CD4-positive, alpha-beta T cell (primary cell): ENCODE measurements at regions of chr17 and their contacts with region 1.

Region 1: DNA sequence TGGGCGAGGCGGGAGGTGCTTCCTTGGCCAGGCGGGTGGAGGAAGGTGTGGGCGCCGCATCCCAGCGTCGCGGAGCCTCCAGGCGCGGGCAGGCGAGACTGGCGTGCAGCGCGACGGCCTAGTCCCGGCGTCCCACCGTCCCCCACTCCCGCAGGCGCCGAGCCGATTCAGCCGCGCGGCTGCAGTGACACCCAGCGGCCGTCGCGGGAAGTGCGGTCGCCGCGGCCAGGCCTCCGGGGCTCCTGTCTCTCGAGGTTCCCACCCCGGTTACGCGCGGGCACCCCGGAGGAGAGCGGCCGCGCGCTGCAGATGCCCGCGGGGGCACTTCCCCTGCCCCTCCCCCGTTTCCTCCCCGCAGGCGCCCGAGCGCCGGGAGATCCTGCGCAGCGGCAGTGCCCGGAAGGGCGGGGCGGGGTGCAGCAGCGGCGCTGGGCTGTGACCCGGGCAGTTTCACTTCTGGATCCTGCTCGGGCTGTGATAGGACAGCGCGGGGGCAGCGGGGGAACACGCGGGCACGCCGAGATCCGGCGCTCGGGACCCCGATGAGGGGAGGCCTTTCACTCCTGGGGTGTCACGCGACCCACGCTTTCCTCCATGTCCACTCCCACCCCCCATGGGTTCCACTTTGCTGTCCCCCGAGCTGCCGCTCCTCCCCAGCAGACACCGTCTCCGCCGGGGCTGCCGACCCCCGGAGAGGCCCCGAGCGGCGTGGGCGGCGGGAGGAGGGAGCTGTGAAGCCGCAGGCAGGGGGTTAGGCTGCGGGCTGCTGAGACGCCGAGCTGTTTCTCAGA is 16.6 kb downstream of the GRB7 start:
- DNase-seq: peak; percentile 92 to 99 (median 97)
- ATAC-seq: peak; percentile 72
- H3K4me3 ChIP-seq: peak overlapping the region; percentile 71
- H3K4me3 Mint-ChIP-seq: peak overlapping the region; percentile 87
- H3K27ac ChIP-seq: peak overlapping the region; percentile 95 to 97
- H3K27ac Mint-ChIP-seq: peak overlapping the region; percentile 92
- H3K4me1 ChIP-seq: peaks cover 59% of the 10 kb centered on the region
- H3K4me1 Mint-ChIP-seq: peaks cover 56% of the 10 kb centered on the region
- H3K27me3 ChIP-seq: no peaks in the 10 kb centered on the region
- H3K27me3 Mint-ChIP-seq: no peaks in the 10 kb centered on the region
- CTCF ChIP-seq: peak; percentile 89

Region 2: DNA sequence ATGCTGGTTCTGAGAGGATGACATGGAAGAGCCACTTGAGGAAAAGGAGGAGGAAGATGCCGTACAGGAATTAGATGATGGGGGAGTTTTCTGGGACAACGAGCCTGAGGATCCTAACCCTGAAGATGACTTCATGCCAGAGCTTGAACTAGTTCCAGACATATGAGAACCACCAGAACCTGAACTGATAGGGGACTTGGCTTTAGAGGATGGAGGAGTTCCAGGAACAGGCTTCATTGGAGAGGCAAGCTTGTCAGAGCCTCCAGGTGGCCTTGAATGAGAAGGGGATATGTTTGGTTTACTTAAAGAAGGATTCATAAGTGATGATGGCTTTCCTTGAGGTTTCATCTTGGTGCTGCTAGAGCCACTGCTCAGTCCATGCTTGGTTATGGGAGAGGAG is 346.0 kb before region 1 on chr17:
- CTCF ChIA-PET with region 1: no interaction called
- POLR2A ChIA-PET with region 1: no interaction called
- intact Hi-C with region 1: no loop called
- DNase-seq: no peak
- ATAC-seq: no peak
- H3K4me3 ChIP-seq: no peak overlapping the region
- H3K4me3 Mint-ChIP-seq: no peak overlapping the region
- H3K27ac ChIP-seq: no peak overlapping the region
- H3K27ac Mint-ChIP-seq: no peak overlapping the region
- H3K4me1 ChIP-seq: no peaks in the 10 kb centered on the region
- H3K4me1 Mint-ChIP-seq: peaks cover 5% of the 10 kb centered on the region
- H3K27me3 ChIP-seq: no peaks in the 10 kb centered on the region
- H3K27me3 Mint-ChIP-seq: no peaks in the 10 kb centered on the region
- CTCF ChIP-seq: no peak

Region 3: GRCh38 chr17:39527220-39527813 is 227.0 kb before region 1 on chr17:
- CTCF ChIA-PET with region 1: no interaction called
- POLR2A ChIA-PET with region 1: no interaction called
- intact Hi-C with region 1: loop called in 1 of 2 experiments (anchors 1 kb)
- DNase-seq: peak in 3 of 14 experiments; percentile 27 to 30 (median 27)
- ATAC-seq: no peak
- H3K4me3 ChIP-seq: no peak overlapping the region
- H3K4me3 Mint-ChIP-seq: no peak overlapping the region
- H3K27ac ChIP-seq: no peak overlapping the region
- H3K27ac Mint-ChIP-seq: no peak overlapping the region
- H3K4me1 ChIP-seq: no peaks in the 10 kb centered on the region
- H3K4me1 Mint-ChIP-seq: no peaks in the 10 kb centered on the region
- H3K27me3 ChIP-seq: no peaks in the 10 kb centered on the region
- H3K27me3 Mint-ChIP-seq: no peaks in the 10 kb centered on the region
- CTCF ChIP-seq: peak; percentile 46

Region 4: GRCh38 chr17:39668199-39668966 is 86.0 kb before region 1 on chr17 and contains the start of gene PNMT:
- CTCF ChIA-PET with region 1: interaction called, 3 read pairs
- POLR2A ChIA-PET with region 1: no interaction called
- intact Hi-C with region 1: loop called in 1 of 2 experiments (anchors 5 kb)
- DNase-seq: peak; percentile 42 to 85 (median 62)
- ATAC-seq: peak; percentile 80
- H3K4me3 ChIP-seq: peak within 1 kb of the TSS; percentile 32
- H3K4me3 Mint-ChIP-seq: peak within 1 kb of the TSS; percentile 59
- H3K27ac ChIP-seq: no peak within 1 kb of the TSS
- H3K27ac Mint-ChIP-seq: no peak within 1 kb of the TSS
- H3K4me1 ChIP-seq: peaks cover 35% of the 10 kb centered on the region
- H3K4me1 Mint-ChIP-seq: peaks cover 15% of the 10 kb centered on the region
- H3K27me3 ChIP-seq: peaks cover 15 to 34% of the 10 kb centered on the region in 2 experiments
- H3K27me3 Mint-ChIP-seq: peaks cover 34% of the 10 kb centered on the region
- CTCF ChIP-seq: peak; percentile 78
- total RNA-seq, gene PNMT: 0.47 TPM in 1 of 2 experiments, not detected in the other

Region 5: GRCh38 chr17:39777534-39778365 is 23.4 kb after region 1 on chr17:
- CTCF ChIA-PET with region 1: interaction called, 34 read pairs
- POLR2A ChIA-PET with region 1: interaction called, 46 read pairs
- intact Hi-C with region 1: no loop called
- DNase-seq: peak in 4 of 14 experiments; percentile 42 to 67 (median 66)
- ATAC-seq: peak; percentile 58
- H3K4me3 ChIP-seq: peak overlapping the region; percentile 64
- H3K4me3 Mint-ChIP-seq: peak overlapping the region; percentile 91
- H3K27ac ChIP-seq: peak overlapping the region; percentile 74 to 78
- H3K27ac Mint-ChIP-seq: peak overlapping the region; percentile 84
- H3K4me1 ChIP-seq: peaks cover 62% of the 10 kb centered on the region
- H3K4me1 Mint-ChIP-seq: peaks cover 89% of the 10 kb centered on the region
- H3K27me3 ChIP-seq: no peaks in the 10 kb centered on the region
- H3K27me3 Mint-ChIP-seq: no peaks in the 10 kb centered on the region
- CTCF ChIP-seq: no peak

Region 6: GRCh38 chr17:39813631-39814030 is 59.3 kb after region 1 on chr17:
- CTCF ChIA-PET with region 1: interaction called, 22 read pairs
- POLR2A ChIA-PET with region 1: interaction called, 42 read pairs
- intact Hi-C with region 1: loop called in 1 of 2 experiments (anchors 5 kb)
- DNase-seq: peak; percentile 39 to 94 (median 54)
- ATAC-seq: peak; percentile 90
- H3K4me3 ChIP-seq: peak overlapping the region; percentile 15
- H3K4me3 Mint-ChIP-seq: peak overlapping the region; percentile 76
- H3K27ac ChIP-seq: peak overlapping the region; percentile 68 to 79
- H3K27ac Mint-ChIP-seq: peak overlapping the region; percentile 90
- H3K4me1 ChIP-seq: peaks cover 35% of the 10 kb centered on the region
- H3K4me1 Mint-ChIP-seq: peaks cover 84% of the 10 kb centered on the region
- H3K27me3 ChIP-seq: no peaks in the 10 kb centered on the region
- H3K27me3 Mint-ChIP-seq: no peaks in the 10 kb centered on the region
- CTCF ChIP-seq: no peak

Region 7: GRCh38 chr17:39927101-39927928 is 173.0 kb after region 1 on chr17 and contains the starts of genes LRRC3C and ORMDL3:
- CTCF ChIA-PET with region 1: interaction called, 3 read pairs
- POLR2A ChIA-PET with region 1: interaction called, 34 read pairs
- intact Hi-C with region 1: loop called in 1 of 2 experiments (anchors 1 kb)
- DNase-seq: peak; percentile 83 to 95 (median 88)
- ATAC-seq: peak; percentile 76
- H3K4me3 ChIP-seq: peak within 1 kb of the TSS; percentile 89
- H3K4me3 Mint-ChIP-seq: peak within 1 kb of the TSS; percentile 92
- H3K27ac ChIP-seq: peak within 1 kb of the TSS; percentile 63 to 90
- H3K27ac Mint-ChIP-seq: peak within 1 kb of the TSS; percentile 93
- H3K4me1 ChIP-seq: peaks cover 55% of the 10 kb centered on the region
- H3K4me1 Mint-ChIP-seq: peaks cover 53% of the 10 kb centered on the region
- H3K27me3 ChIP-seq: no peaks in the 10 kb centered on the region
- H3K27me3 Mint-ChIP-seq: no peaks in the 10 kb centered on the region
- CTCF ChIP-seq: no peak
- total RNA-seq, gene LRRC3C: not detected
- total RNA-seq, gene ORMDL3: 103 to 105 TPM